ENCODE measurements at regions of chr13 and their contacts with region 1.

Region 1: DNA sequence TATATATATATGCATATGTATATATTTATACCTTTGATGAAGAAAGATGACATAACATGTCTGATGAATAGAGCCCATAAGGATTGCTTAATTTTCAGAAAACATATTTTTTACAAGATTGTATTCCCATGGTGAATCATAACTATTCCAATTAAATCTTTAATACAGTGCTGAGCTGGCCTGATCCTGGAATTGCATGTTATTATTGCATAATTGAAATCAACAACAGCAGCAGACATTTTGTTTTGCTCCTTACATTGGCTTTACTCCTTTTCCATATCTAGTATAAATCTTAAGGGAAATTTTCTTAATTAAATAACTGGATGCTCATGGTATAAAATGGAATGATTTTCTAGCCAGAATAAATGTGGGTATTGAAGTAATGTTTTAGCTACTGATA is 22.0 kb downstream of the POSTN start:
- DNase-seq: no peak
- ATAC-seq: no peak
- H3K4me3 ChIP-seq: no peak overlapping the region
- H3K27ac ChIP-seq: no peak overlapping the region
- H3K4me1 ChIP-seq: no peaks in the 10 kb centered on the region
- H3K27me3 ChIP-seq: no peaks in the 10 kb centered on the region

Region 2: GRCh38 chr13:37515226-37515625 is 61.4 kb before region 1 on chr13:
- intact Hi-C with region 1: no loop called
- DNase-seq: no peak
- ATAC-seq: no peak
- H3K4me3 ChIP-seq: no peak overlapping the region
- H3K27ac ChIP-seq: no peak overlapping the region
- H3K4me1 ChIP-seq: no peaks in the 10 kb centered on the region
- H3K27me3 ChIP-seq: no peaks in the 10 kb centered on the region

Region 3: GRCh38 chr13:37534181-37534580 is 42.4 kb before region 1 on chr13:
- intact Hi-C with region 1: loop called in 1 of 4 experiments (anchors 5 kb)
- DNase-seq: no peak
- ATAC-seq: no peak
- H3K4me3 ChIP-seq: no peak overlapping the region
- H3K27ac ChIP-seq: no peak overlapping the region
- H3K4me1 ChIP-seq: no peaks in the 10 kb centered on the region
- H3K27me3 ChIP-seq: no peaks in the 10 kb centered on the region